Activated B cell treated with CpG ODN at 0.5 μM for 24 hours (primary cell): ENCODE measurements at regions of chr15 and their contacts with region 1.

Region 1: DNA sequence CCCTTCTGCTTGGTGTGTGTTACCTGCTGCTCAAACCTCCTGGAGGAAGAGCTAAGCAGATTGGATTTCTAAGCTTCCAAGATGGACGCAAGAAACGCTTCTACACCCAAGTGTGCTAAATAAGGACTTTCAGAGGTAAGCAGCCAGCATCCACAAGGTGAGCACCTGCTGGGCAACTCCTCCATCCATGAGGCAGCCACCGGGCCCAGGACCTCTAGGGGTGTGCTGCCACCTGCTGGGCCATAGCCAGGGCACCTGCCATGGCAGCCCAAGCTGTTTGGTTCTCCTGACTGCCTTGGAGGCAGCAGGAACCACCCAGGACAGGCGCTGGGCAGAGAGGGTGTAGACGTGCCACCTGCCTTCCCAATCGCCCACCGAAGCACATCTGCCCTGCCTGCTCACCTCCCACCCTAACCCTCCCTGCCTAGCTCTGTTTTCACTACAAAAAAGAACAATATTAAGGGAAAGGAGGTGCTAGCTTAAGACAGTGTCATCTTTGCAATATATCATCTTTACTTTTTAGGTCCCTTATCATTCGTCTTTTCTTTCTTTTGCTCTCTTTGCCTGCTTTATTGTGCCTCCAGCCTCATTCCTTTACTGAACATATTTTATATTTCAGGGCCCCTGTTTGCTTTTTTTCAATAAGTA is 12.9 kb downstream of the C15orf62 start:
- DNase-seq: peak; percentile 76
- ATAC-seq: peak; percentile 100
- H3K4me3 Mint-ChIP-seq: no peak overlapping the region
- H3K27ac Mint-ChIP-seq: peak overlapping the region; percentile 18
- H3K4me1 Mint-ChIP-seq: peaks cover 12% of the 10 kb centered on the region
- H3K27me3 Mint-ChIP-seq: no peaks in the 10 kb centered on the region
- CTCF ChIP-seq: no peak

Region 2: DNA sequence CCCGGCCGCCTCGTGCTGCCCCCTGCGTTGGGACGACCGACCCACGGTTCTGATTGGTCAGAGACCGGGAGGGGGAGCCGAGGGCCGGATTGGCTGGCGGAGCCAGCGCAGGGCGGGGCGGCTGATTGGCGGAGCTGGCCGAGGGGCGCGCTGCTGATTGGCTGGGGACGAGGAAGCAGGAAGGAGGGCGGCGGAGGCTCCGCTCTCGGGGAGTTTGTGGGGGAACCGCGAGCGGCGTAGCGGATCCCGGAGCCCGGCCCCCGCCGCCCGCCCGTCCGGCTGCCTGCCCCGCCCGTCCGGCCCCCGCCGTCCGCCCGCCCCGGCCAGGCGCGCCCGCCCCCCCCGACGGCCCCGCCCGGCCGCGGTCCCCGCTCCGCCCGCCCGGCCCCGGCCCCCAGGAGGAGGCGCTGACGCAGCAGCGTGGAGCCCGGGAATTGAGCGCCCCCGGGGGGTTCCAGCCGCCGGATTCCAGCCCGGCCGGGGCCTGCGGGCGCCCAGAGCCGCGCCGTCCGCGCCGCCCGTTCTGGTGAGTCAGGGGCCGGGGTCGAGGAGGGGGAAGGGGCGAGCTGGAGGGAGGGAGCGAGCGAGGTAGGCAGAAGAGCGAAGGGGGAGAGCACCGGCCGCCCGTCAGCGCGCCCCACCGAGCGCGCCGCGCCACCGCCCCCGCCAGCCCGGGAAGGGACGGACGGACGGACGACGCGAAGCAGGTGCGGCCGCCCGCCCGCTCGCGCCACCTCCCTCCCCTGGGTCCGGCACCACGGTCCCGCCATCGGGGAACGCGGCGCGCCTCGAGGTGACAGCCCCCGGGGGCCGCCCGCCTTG is 341.8 kb before region 1 on chr15 and contains the start of gene BAHD1:
- CTCF ChIA-PET with region 1: no interaction called
- POLR2A ChIA-PET with region 1: no interaction called
- intact Hi-C with region 1: loop called (anchors 5 kb)
- DNase-seq: peak; percentile 93
- ATAC-seq: peak; percentile 92
- H3K4me3 Mint-ChIP-seq: peak within 1 kb of the TSS; percentile 88
- H3K27ac Mint-ChIP-seq: peak within 1 kb of the TSS; percentile 68
- H3K4me1 Mint-ChIP-seq: peaks cover 59% of the 10 kb centered on the region
- H3K27me3 Mint-ChIP-seq: peaks cover 22% of the 10 kb centered on the region
- CTCF ChIP-seq: no peak
- total RNA-seq, gene BAHD1: 27.5 and 28.4 TPM in 2 replicates

Region 3: GRCh38 chr15:40593588-40594428 is 188.9 kb before region 1 on chr15 and contains the start of gene KNL1:
- CTCF ChIA-PET with region 1: interaction called, 21 read pairs
- POLR2A ChIA-PET with region 1: no interaction called
- intact Hi-C with region 1: loop called (anchors 1 kb)
- DNase-seq: peak; percentile 84
- ATAC-seq: peak; percentile 83
- H3K4me3 Mint-ChIP-seq: peak within 1 kb of the TSS; percentile 95
- H3K27ac Mint-ChIP-seq: peak within 1 kb of the TSS; percentile 99
- H3K4me1 Mint-ChIP-seq: peaks cover 21% of the 10 kb centered on the region
- H3K27me3 Mint-ChIP-seq: peaks cover 2% of the 10 kb centered on the region
- CTCF ChIP-seq: no peak
- total RNA-seq, gene KNL1: 5.1 and 7.7 TPM in 2 replicates

Region 4: DNA sequence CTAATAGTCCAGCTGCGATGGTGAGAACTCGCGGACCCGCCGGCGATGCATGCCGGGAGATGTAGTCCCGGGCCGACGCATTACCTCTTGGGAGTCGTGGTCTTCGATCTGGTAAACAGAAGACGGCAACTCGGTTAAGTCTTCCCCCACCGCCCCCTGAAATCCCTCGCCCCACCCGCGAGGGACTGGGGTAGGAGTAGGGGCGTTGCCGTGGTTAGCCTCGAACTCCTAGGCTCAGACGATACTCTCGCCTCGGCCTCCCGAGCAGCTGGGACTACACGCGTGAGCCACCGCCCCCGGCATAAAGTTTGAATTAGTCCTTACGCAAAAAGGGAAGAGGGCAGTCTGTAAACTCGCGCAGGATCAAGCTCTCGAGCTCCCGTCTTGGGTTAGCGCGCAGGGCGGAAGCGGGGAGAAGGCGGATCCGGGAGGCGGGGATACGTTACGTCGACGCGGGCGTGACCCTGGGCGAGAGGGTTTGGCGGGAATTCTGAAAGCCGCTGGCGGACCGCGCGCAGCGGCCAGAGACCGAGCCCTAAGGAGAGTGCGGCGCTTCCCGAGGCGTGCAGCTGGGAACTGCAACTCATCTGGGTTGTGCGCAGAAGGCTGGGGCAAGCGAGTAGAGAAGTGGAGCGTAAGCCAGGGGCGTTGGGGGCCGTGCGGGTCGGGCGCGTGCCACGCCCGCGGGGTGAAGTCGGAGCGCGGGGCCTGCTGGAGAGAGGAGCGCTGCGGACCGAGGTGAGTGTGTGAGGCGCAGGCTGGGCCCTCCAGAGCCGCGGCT is 87.8 kb before region 1 on chr15 and contains the start of gene RAD51:
- CTCF ChIA-PET with region 1: interaction called, 16 read pairs
- POLR2A ChIA-PET with region 1: interaction called, 7 read pairs
- intact Hi-C with region 1: loop called (anchors 2 kb)
- DNase-seq: peak; percentile 88
- ATAC-seq: peak; percentile 90
- H3K4me3 Mint-ChIP-seq: peak within 1 kb of the TSS; percentile 99
- H3K27ac Mint-ChIP-seq: peak within 1 kb of the TSS; percentile 98
- H3K4me1 Mint-ChIP-seq: peaks cover 25% of the 10 kb centered on the region
- H3K27me3 Mint-ChIP-seq: no peaks in the 10 kb centered on the region
- CTCF ChIP-seq: no peak
- total RNA-seq, gene RAD51: 2.6 and 4.1 TPM in 2 replicates

Region 5: DNA sequence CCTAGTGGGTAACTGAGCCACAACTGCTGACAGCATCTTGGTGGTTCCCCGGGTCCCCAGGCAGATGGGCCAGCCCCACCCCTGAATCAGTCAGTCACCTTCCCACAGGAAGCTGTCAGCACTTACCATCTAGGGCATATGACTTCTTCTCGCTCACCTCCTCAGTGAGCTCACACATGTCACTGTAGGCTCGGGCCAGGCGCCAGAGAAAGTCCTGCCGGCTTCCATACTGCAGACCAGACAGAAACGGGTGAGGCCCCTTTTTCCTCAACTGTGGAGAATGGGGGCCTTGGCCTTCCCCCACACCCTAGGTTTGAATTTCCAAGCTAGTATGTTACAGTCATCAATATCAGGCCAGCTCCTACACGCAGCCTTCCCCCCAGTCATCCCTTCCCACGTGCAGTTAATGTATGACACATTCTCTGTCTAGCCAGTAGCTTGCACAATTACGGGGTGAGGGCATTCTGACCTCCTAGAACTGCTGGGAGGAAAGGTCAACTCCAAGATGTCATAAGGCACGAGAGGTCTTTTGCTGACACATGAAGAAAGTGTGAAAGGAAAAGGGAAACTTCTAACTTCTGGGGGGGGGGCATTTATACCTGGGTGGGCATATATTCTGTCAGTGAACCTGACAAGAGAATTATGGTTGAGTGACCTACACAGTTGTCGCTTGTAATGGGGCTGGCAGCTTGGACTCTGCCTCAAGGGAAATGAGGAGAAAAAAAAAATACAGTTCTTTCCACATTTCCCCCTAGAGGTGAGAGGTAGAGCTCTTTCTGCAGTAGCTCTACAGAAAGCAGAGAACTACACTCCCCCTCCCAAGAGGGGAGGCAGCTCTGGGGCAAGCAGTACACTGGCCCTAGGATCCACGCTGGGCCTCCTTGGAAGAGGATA is 38.5 kb before region 1 on chr15:
- CTCF ChIA-PET with region 1: interaction called, 81 read pairs
- POLR2A ChIA-PET with region 1: interaction called, 3 read pairs
- intact Hi-C with region 1: loop called (anchors 1 kb)
- DNase-seq: no peak
- ATAC-seq: no peak
- H3K4me3 Mint-ChIP-seq: no peak overlapping the region
- H3K27ac Mint-ChIP-seq: no peak overlapping the region
- H3K4me1 Mint-ChIP-seq: no peaks in the 10 kb centered on the region
- H3K27me3 Mint-ChIP-seq: no peaks in the 10 kb centered on the region
- CTCF ChIP-seq: no peak

Region 6: DNA sequence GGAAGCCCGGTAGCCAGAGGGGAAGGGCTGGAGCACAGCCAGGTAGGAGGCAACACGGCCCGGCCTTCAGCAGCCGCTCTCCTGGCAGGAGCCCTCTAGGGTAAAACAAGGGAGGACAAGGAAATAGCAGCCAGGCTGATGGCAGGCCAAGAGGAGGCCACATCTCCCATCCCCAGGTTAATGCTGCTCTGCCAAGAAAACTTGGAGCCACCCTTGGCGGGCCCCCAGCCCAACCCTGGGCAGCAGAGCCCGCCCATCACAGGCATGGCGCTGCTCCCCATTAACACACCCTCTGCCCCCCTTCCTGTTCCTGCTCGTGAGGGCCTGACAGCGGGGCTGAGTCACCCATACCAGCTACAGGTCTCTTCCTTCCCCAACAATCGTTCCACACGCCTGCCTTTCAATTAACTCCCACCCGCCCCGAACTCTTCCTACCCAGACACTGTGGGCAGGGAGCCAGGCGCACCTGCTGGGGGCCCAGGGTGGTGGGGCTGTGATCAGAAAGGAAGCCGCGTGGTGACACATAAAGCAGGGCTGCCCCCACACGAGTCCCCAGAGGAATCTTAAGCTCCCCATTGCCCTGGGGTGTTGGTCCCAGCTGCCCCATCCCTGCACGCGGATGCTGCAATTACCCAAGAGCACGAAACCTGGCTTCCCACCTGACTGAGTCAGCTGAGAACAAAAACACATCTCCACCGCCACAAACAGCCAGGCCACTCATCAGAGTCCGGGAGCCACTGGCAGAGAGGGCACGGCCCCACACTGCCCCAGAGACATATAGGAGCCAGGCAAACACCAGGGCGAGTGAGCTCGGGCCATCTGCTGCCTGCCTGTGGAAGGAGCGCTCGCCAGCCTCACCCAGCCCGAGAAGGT is 13.2 kb before region 1 on chr15 and contains the start of gene C15orf62:
- CTCF ChIA-PET with region 1: interaction called, 45 read pairs
- POLR2A ChIA-PET with region 1: interaction called, 13 read pairs
- intact Hi-C with region 1: loop called (anchors 1 kb)
- DNase-seq: peak; percentile 81
- ATAC-seq: peak; percentile 84
- H3K4me3 Mint-ChIP-seq: peak within 1 kb of the TSS; percentile 82
- H3K27ac Mint-ChIP-seq: peak within 1 kb of the TSS; percentile 93
- H3K4me1 Mint-ChIP-seq: peaks cover 59% of the 10 kb centered on the region
- H3K27me3 Mint-ChIP-seq: no peaks in the 10 kb centered on the region
- CTCF ChIP-seq: no peak
- total RNA-seq, gene C15orf62: 5.7 and 6.5 TPM in 2 replicates

Region 7: DNA sequence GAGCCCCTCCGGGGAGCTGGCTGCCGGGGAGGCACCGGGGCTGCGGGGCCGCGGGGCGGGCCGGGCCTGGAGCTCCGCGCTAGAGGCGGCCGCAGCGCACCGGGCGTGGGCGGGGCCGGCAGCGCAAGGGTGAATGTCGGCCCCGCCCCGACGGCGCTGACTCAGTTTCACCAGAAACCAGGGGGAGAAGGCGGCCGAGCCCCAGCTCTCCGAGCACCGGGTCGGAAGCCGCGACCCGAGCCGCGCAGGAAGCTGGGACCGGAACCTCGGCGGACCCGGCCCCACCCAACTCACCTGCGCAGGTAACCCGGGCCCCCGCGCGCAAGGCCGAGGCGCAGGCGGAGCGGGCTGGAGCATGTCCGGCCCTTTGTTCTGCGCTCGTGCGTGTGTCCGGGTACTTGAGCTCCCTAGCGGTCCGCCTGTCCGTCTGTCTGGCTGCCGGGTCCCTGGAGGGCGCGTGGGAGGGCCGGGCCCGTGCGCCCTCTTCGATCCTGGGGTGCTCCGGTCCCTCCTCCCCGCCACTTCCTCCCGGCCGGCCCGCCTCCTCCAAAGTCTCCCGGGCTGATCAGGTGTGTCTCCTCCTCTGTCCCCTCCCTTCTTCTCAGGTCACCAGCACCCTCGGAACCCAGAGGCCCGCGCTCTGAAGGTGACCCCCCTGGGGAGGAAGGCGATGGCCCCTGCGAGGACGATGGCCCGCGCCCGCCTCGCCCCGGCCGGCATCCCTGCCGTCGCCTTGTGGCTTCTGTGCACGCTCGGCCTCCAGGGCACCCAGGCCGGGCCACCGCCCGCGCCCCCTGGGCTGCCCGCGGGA is 61.4 kb after region 1 on chr15 and contains the start of gene SPINT1:
- CTCF ChIA-PET with region 1: no interaction called
- POLR2A ChIA-PET with region 1: no interaction called
- intact Hi-C with region 1: no loop called
- DNase-seq: peak; percentile 49
- ATAC-seq: peak; percentile 69
- H3K4me3 Mint-ChIP-seq: peak within 1 kb of the TSS; percentile 82
- H3K27ac Mint-ChIP-seq: peak within 1 kb of the TSS; percentile 55
- H3K4me1 Mint-ChIP-seq: peaks cover 39% of the 10 kb centered on the region
- H3K27me3 Mint-ChIP-seq: no peaks in the 10 kb centered on the region
- CTCF ChIP-seq: no peak
- total RNA-seq, gene SPINT1: 8.6 and 8.7 TPM in 2 replicates